Ascending aorta (tissue), 2 donors: ENCODE measurements at regions of chr11 and their contacts with region 1.

Region 1: DNA sequence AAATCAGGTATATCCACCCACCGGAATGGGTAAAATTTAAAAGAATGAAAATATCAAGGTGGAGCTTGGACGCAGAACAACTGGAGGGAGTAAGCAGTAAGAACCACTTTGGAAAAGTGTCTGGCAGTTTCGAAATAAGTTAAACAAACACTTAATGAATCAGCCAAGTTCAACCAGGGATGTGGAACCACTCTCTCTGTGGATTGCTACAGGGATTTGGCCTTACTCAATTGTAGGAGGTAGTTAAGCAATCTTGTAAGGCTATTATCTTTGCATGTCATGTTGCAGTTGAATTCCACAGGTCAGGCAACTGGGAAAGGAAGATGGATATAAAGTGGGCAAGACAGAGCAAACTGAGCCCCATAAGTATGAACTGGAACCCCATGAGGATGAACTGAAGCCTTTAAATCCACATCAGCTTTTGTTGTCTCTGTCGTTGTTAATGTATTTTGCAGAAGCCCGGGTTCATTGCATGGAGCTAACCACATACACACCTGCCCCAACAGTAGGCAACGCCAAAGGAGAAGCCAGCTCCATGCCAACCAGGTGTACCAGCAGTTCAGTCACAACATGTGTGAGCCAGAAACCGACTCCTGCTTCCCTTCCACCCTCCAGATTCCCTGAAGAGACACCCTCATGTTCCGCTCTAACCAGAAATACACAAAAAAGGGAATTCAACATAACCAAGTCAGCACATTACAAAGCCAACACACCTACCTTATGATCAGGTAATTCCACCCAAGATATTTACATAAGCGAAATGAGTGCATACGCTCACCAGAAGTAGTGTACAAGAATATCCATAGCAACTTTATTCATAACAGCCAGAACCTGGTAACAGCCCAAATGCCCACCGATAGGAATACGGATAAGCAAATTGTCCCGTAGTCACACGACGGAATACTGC is 8.0 kb upstream of the SLC43A3 start:
- DNase-seq: peak in 1 of 2 donors; percentile 69
- H3K4me3 ChIP-seq: no peak overlapping the region
- H3K27ac ChIP-seq: no peak overlapping the region
- H3K4me1 ChIP-seq: peaks cover 0 to 4% of the 10 kb centered on the region in 2 donors
- H3K27me3 ChIP-seq: no peaks in the 10 kb centered on the region
- CTCF ChIP-seq: no peak

Region 2: GRCh38 chr11:57456960-57457642 is 22.2 kb after region 1 on chr11:
- intact Hi-C with region 1: loop called (anchors 2 kb)
- DNase-seq: peak; percentile 50 to 95
- H3K4me3 ChIP-seq: peak overlapping the region; percentile 53 to 55
- H3K27ac ChIP-seq: no peak overlapping the region
- H3K4me1 ChIP-seq: peaks cover 16 to 32% of the 10 kb centered on the region in 2 donors
- H3K27me3 ChIP-seq: peaks cover 28% of the 10 kb centered on the region
- CTCF ChIP-seq: peak; percentile 91 to 100 (median 100)